ENCODE measurements at regions of chr6 and their contacts with region 1.

Region 1: GRCh38 chr6:139881728-139882211 is 507.3 kb upstream of the CITED2 start:
- DNase-seq: peak in 1 of 2 experiments; percentile 58
- H3K4me3 ChIP-seq: no peak overlapping the region
- H3K27ac ChIP-seq: no peak overlapping the region
- H3K4me1 ChIP-seq: peaks cover 4 to 38% (median 16%) of the 10 kb centered on the region in 4 experiments; a peak in 6 of 7 replicates
- H3K27me3 ChIP-seq: no peaks in the 10 kb centered on the region
- CTCF ChIP-seq: peak in 2 of 3 experiments; percentile 45 to 59; a peak in 3 of 4 replicates
- EP300 ChIP-seq: no peak
- POLR2A ChIP-seq: no peak
- RAD21 ChIP-seq: peak; percentile 63 to 68

Region 2: GRCh38 chr6:139852488-139853140 is 29.2 kb before region 1 on chr6:
- CTCF ChIA-PET with region 1: interaction called, 16 read pairs
- POLR2A ChIA-PET with region 1: no interaction called
- DNase-seq: no peak
- H3K4me3 ChIP-seq: no peak overlapping the region
- H3K27ac ChIP-seq: no peak overlapping the region
- H3K4me1 ChIP-seq: no peaks in the 10 kb centered on the region; a peak in 1 of 7 replicates
- H3K27me3 ChIP-seq: peaks cover 0 to 1% (median 0%) of the 10 kb centered on the region in 4 experiments; a peak in 1 of 7 replicates
- CTCF ChIP-seq: no peak
- EP300 ChIP-seq: no peak
- POLR2A ChIP-seq: no peak
- RAD21 ChIP-seq: no peak

Region 3: DNA sequence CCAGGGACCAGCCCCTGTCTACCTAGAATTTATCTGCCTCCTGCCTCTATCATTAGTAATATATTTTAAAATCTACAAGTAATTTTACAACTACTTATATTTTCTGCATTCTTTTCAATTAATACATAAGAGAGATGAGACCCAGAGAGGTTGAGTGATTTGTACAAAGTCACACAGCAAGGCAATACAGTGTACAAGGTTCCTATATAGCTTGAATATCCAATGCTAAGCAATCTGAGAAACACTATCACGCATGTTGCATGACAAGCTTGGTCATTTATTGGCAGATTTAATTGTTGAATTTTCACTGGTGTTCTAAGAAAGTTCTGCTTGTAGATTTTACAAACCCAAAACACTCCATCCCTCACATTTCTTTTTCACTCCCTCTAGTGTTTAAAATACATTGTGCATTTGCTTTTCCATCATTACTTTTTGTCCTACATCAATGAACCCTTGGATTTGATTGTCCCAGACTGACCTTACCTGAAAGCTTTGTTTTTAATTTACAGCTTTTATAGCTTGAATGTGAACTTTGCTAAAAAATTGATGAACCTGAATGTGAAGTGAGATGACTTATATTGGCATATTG is 13.5 kb after region 1 on chr6:
- CTCF ChIA-PET with region 1: interaction called, 11 read pairs
- POLR2A ChIA-PET with region 1: no interaction called
- DNase-seq: no peak
- H3K4me3 ChIP-seq: no peak overlapping the region
- H3K27ac ChIP-seq: no peak overlapping the region
- H3K4me1 ChIP-seq: peaks cover 0 to 3% (median 0%) of the 10 kb centered on the region in 4 experiments; a peak in 2 of 7 replicates
- H3K27me3 ChIP-seq: no peaks in the 10 kb centered on the region
- CTCF ChIP-seq: peak in 1 of 3 experiments; percentile 10; a peak in 1 of 4 replicates
- EP300 ChIP-seq: no peak
- POLR2A ChIP-seq: no peak
- RAD21 ChIP-seq: no peak

Region 4: GRCh38 chr6:139965393-139965792 is 83.6 kb after region 1 on chr6:
- CTCF ChIA-PET with region 1: no interaction called
- POLR2A ChIA-PET with region 1: no interaction called
- DNase-seq: no peak
- H3K4me3 ChIP-seq: no peak overlapping the region
- H3K27ac ChIP-seq: no peak overlapping the region
- H3K4me1 ChIP-seq: peaks cover 0 to 3% (median 0%) of the 10 kb centered on the region in 4 experiments; a peak in 1 of 7 replicates
- H3K27me3 ChIP-seq: no peaks in the 10 kb centered on the region
- CTCF ChIP-seq: no peak
- EP300 ChIP-seq: no peak
- POLR2A ChIP-seq: no peak
- RAD21 ChIP-seq: no peak

Measured in H1 (cell line).